ENCODE measurements at regions of chr2 and their contacts with region 1.

Region 1: DNA sequence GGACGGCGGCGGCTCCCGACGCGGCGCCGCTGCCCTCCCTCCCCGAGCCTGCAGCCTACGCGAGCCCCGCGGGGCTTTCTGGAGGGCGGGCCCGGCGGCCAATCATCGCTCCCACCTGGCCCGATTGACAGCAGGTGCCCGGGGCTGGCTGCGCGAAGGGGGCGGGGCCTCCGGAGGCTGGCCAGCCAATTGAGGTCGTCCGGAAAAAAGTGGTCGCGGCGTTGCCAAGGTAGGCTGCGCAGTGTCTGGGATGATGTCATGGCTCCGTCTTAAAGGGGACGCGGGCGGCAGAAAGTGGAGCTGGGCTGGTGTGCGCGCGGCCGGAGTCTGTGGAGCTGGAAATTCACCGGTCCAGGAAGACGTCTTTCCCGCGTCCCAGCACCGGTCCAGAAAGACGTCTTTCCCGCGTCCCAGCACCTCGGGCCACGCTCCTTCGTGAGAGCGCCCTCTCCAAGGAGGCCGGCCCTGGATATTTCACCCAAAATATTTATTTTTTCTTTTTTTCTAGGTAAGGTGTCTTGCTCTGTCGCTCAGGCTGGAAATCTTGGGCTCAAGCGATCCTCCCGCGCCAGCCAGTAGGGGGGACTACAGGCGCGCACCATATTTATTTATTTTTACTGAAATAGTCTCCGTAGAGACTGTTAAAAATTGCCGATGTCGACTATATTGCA is at the start of gene ACTR1B:
- DNase-seq: peak; percentile 98
- ATAC-seq: peak; percentile 92
- H3K4me3 Mint-ChIP-seq: peak within 1 kb of the TSS; percentile 98
- H3K27ac Mint-ChIP-seq: peak within 1 kb of the TSS; percentile 99
- H3K4me1 Mint-ChIP-seq: peaks cover 32% of the 10 kb centered on the region
- H3K27me3 Mint-ChIP-seq: no peaks in the 10 kb centered on the region
- total RNA-seq, gene ACTR1B: 73.2 to 74.3 TPM

Region 2: GRCh38 chr2:97645695-97646629 is 18.1 kb before region 1 on chr2 and contains the start of gene COX5B:
- CTCF ChIA-PET with region 1: interaction called, 47 read pairs
- POLR2A ChIA-PET with region 1: interaction called, 187 read pairs
- DNase-seq: peak; percentile 99
- ATAC-seq: peak; percentile 98
- H3K4me3 Mint-ChIP-seq: peak within 1 kb of the TSS; percentile 89
- H3K27ac Mint-ChIP-seq: peak within 1 kb of the TSS; percentile 93
- H3K4me1 Mint-ChIP-seq: peaks cover 17% of the 10 kb centered on the region
- H3K27me3 Mint-ChIP-seq: peaks cover 2% of the 10 kb centered on the region
- total RNA-seq, gene COX5B: 215 to 216 TPM

Region 3: DNA sequence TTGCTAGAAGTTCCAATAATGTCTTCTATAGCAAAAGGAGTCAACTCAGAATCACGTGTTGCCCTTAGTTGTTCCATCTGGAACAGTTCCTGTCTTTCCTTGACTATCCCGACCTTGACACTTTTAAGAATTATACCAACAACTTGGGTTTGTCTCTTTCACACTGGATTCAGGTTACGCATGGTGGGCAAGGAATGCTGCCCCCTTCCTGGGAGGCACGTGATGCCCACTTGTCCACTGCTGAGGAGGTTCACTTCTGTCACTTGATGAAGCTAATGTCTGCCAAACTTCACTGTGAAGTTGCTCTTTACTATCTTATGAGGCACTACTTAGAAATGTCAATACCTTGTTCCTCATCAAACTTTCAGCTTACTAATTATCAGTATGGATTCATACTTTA is 13.0 kb before region 1 on chr2:
- CTCF ChIA-PET with region 1: interaction called, 47 read pairs
- POLR2A ChIA-PET with region 1: interaction called, 187 read pairs
- DNase-seq: no peak
- ATAC-seq: no peak
- H3K4me3 Mint-ChIP-seq: no peak overlapping the region
- H3K27ac Mint-ChIP-seq: no peak overlapping the region
- H3K4me1 Mint-ChIP-seq: peaks cover 9% of the 10 kb centered on the region
- H3K27me3 Mint-ChIP-seq: no peaks in the 10 kb centered on the region

Region 4: DNA sequence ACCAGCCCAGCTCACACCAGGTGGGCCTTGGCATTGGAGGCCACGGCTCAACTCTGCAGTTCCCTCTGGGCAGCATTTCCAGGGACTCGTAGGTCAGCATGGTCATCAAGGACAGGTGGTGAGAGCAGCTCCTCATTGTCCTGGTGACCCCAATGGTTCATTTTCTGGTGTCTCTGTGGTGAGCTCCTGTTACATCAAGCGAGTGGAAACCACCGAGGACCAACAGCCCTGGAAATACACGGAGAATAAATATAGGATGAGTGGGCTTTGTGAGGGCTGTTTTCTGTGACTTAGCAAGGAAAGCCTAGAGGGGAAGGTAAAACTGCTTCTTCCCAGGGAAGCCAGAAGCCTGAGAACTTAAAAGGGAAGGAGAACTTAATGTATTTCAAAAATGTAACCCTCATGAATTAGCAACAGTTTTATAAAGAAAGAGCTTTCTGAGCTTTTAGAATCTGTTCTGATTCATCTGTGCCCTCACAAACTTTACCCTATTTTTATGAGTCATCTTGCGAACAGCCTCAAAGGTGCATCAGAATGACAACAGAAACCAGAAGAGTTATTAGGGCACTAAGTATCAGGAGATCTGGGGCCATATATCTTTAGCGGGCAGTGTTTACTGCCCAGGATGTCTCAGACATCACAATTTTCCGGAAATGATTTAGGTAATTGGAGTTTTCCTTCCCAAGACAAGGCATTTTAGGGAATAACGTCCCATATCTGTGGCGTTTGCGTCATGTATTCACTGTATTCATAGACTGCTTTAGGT is 24.1 kb after region 1 on chr2:
- CTCF ChIA-PET with region 1: interaction called, 21 read pairs
- POLR2A ChIA-PET with region 1: interaction called, 4 read pairs
- DNase-seq: no peak
- ATAC-seq: peak; percentile 53
- H3K4me3 Mint-ChIP-seq: no peak overlapping the region
- H3K27ac Mint-ChIP-seq: no peak overlapping the region
- H3K4me1 Mint-ChIP-seq: peaks cover 18% of the 10 kb centered on the region
- H3K27me3 Mint-ChIP-seq: no peaks in the 10 kb centered on the region

Region 5: DNA sequence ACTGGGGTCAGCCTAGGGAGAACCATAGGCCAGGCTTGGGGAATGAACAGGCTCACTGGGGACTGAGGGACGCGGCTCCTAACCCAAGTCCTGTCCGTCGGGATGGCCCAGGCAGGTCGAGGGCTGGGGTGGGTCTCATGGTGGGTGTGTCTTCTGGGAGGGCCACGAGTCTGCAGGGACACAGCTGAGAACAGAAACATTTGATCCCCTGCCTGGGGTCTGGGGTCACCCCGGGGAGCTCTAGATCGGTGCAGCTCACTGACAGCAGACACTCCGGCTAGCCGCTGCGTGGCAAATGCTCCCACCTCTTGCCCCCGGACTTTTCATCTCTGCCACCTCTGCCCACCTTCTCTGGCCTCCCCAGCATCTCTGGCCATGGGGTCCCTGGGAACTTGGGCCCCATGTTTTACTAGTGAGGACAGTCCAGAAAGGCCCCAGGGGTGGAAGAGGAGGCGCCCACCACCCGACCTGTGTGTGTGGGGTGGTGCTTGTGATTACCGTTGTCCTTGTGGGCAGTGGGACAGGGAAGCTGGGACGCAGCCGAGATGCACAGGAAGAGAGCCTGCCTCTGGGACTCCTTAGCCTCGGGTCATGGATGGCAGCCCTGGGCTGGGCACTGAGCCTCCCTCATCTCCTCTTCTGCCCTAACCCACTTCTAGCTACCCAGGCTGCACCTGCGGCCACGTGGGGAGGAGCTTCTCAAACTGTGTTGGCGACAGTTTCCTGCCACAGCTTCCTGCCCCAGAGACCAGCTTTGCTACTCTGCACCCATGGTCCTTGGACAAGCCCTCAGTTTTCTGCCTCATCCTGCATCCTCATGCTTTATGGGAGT is 54.2 kb after region 1 on chr2:
- CTCF ChIA-PET with region 1: interaction called, 13 read pairs
- POLR2A ChIA-PET with region 1: interaction called, 4 read pairs
- DNase-seq: peak; percentile 90
- ATAC-seq: peak; percentile 77
- H3K4me3 Mint-ChIP-seq: peak overlapping the region; percentile 93
- H3K27ac Mint-ChIP-seq: peak overlapping the region; percentile 98
- H3K4me1 Mint-ChIP-seq: peaks cover 78% of the 10 kb centered on the region
- H3K27me3 Mint-ChIP-seq: no peaks in the 10 kb centered on the region

Region 6: DNA sequence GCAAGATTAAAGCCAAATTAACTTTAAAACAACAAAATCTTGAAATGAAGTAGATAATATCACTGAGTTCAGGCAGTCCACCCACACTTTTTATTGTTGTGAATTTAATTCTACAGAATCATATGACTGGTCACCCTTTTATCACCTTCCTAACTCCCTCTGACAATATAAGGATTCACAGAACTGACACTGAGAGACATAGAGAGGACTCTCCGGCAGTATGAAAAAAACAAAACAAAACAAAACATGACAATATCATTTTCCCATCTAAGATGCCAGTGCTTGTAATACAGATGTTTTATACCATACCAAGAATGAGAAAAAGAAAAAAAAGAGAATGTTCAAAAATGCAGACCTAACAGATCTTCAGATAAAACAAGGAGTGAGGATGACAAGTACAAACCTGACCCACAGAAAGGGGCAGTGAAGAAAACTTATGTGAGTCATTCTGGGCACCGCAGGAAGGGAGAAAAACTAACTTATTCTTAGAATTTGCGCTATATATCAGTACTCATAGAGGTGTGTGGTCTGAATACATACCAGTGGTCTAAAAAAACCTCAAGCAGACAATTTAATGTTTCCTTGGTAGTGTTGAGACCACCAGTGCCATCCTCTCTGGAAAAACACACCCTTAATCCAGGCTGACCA is 185.9 kb after region 1 on chr2:
- CTCF ChIA-PET with region 1: no interaction called
- POLR2A ChIA-PET with region 1: no interaction called
- DNase-seq: peak; percentile 37
- ATAC-seq: peak; percentile 67
- H3K4me3 Mint-ChIP-seq: no peak overlapping the region
- H3K27ac Mint-ChIP-seq: peak overlapping the region; percentile 63
- H3K4me1 Mint-ChIP-seq: peaks cover 35% of the 10 kb centered on the region
- H3K27me3 Mint-ChIP-seq: no peaks in the 10 kb centered on the region